IMR-90 (cell line): ENCODE measurements at regions of chr2 and their contacts with region 1.

Region 1: DNA sequence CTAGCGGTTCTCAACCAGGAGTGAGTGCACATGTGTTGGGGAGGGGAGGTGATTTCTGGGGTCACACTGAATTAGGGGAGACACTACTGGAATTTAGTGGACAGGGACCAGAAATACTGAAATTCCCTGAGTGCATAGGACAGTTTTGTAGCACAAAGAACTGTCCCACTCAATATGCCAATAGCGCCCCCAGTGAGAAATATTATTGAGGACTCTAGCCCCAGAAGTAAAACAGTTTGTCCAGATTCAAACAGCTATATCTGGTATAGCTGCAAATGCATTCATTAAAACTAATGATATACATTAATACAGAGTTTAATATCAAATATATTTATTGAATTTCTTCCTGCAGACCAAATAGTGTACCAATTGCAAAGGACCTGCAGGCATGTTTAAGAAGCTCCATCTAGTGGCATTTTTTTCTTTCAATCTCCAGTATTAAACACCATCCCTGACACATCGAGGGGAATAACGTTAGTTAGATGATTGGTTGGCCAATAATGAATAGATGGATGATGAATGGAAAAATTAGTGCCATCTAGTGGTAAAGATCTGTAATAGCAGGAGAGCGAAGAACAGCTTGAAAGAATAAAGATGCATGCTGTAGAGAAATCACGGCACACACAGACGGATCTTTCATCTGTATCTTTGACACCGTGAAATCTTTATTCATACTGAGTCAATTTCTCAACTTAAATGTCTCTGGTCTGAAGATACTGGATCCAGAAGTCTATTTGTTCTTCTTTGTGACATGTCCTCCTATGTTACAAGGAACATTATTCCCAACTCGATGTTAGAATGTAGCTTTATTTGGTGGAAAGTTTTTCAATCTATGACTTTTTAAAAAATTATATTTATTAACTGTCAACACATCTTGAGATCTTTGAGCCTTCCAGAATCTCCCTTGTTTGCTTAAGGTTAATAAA is 62.5 kb downstream of the DHRS9 start:
- DNase-seq: peak; percentile 41
- ATAC-seq: peak; percentile 75; the same call in 1 of the 2 replicates
- H3K4me3 ChIP-seq: no peak overlapping the region
- H3K27ac ChIP-seq: no peak overlapping the region
- H3K4me1 ChIP-seq: no peaks in the 10 kb centered on the region
- H3K27me3 ChIP-seq: no peaks in the 10 kb centered on the region
- CTCF ChIP-seq: peak; percentile 67
- POLR2A ChIP-seq: no peak
- RAD21 ChIP-seq: peak; percentile 32; the same call in 1 of the 2 replicates

Region 2: GRCh38 chr2:168961450-168962229 is 170.2 kb before region 1 on chr2:
- CTCF ChIA-PET with region 1: no interaction called
- POLR2A ChIA-PET with region 1: no interaction called
- dilution Hi-C with region 1: no loop called
- in situ Hi-C with region 1: no loop called
- intact Hi-C with region 1: loop called (anchors 1 kb)
- DNase-seq: peak; percentile 72
- ATAC-seq: peak; percentile 94
- H3K4me3 ChIP-seq: no peak overlapping the region
- H3K27ac ChIP-seq: no peak overlapping the region
- H3K4me1 ChIP-seq: no peaks in the 10 kb centered on the region
- H3K27me3 ChIP-seq: no peaks in the 10 kb centered on the region
- CTCF ChIP-seq: peak; percentile 72
- POLR2A ChIP-seq: no peak
- RAD21 ChIP-seq: peak; percentile 57

Region 3: GRCh38 chr2:169109502-169110409 is 22.1 kb before region 1 on chr2:
- CTCF ChIA-PET with region 1: interaction called, 7 read pairs
- POLR2A ChIA-PET with region 1: no interaction called
- dilution Hi-C with region 1: no loop called
- in situ Hi-C with region 1: no loop called
- intact Hi-C with region 1: loop called (anchors 1 kb)
- DNase-seq: peak; percentile 62
- ATAC-seq: peak; percentile 84
- H3K4me3 ChIP-seq: no peak overlapping the region
- H3K27ac ChIP-seq: no peak overlapping the region
- H3K4me1 ChIP-seq: no peaks in the 10 kb centered on the region
- H3K27me3 ChIP-seq: no peaks in the 10 kb centered on the region
- CTCF ChIP-seq: peak; percentile 80
- POLR2A ChIP-seq: no peak
- RAD21 ChIP-seq: peak; percentile 69

Region 4: DNA sequence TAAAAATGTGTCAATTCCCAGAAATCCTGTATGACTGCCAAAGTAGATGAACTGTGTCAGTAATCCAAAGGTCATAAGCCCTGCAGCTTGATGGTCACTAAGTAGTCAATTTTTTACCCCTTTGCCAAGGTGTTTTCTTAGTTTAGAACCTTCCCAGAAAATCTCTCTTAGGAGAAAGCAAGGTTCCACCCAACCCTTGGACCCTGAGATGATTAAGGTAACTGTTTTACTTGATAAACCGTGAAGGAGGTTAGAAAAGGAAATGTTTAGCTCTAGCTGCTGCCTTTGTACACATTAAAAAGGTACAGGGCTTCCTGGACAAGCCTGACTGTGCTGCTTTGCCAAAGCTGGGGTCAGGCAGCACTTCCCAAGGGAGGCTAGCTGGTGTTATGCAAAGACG is 254.9 kb after region 1 on chr2:
- CTCF ChIA-PET with region 1: no interaction called
- POLR2A ChIA-PET with region 1: no interaction called
- dilution Hi-C with region 1: no loop called
- in situ Hi-C with region 1: no loop called
- intact Hi-C with region 1: loop called (anchors 10 kb)
- DNase-seq: no peak
- ATAC-seq: no peak
- H3K4me3 ChIP-seq: no peak overlapping the region
- H3K27ac ChIP-seq: no peak overlapping the region
- H3K4me1 ChIP-seq: no peaks in the 10 kb centered on the region
- H3K27me3 ChIP-seq: no peaks in the 10 kb centered on the region
- CTCF ChIP-seq: no peak
- POLR2A ChIP-seq: no peak
- RAD21 ChIP-seq: no peak